CD4-positive, alpha-beta memory T cell (primary cell): ENCODE measurements at regions of chr19 and their contacts with region 1.

Region 1: DNA sequence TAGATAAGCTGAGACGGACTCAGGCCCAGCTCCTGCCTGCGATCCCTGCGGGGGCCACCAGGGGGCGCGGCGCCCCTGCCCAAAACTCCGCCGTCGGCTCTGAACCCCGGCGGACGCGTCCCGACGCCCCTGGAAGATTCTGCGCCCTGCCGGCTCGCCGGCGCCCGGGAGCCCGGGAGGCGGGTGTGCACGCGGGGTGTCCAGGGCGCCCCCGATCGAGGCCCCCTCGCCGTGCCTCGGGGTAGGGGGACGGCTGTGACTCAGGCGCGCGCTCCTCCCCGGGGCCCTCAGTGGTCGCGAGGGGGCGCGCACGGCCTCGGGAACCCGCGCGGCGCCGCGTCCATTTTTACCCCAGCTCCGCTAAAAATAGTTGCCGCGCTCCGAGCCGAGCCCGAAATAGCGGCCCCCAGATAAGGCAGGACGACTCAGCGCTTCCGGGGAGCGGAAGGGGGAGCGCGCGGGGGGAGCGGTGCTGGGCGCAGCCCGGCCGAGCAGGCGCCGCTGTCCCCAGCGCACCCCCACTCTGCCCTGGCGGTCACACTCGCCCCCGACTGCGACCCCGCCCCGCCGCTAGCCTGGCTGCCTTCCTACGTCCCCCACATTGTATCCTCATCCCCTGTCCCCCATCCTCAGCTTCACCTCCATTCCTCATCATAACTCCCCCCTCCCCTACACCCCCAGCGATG is 16.0 kb upstream of the ERCC1 start:
- DNase-seq: peak; percentile 87 to 90 (median 87)
- H3K4me3 ChIP-seq: peak overlapping the region in 1 of 2 donors; percentile 66
- H3K4me3 Mint-ChIP-seq: peak overlapping the region; percentile 65 to 83 (median 78)
- H3K27ac ChIP-seq: peak overlapping the region; percentile 62
- H3K27ac Mint-ChIP-seq: peak overlapping the region in 6 of 7 donors; percentile 83 to 96 (median 92)
- H3K4me1 ChIP-seq: peaks cover 36% of the 10 kb centered on the region
- H3K4me1 Mint-ChIP-seq: peaks cover 15 to 40% (median 27%) of the 10 kb centered on the region in 4 donors
- H3K27me3 ChIP-seq: no peaks in the 10 kb centered on the region
- H3K27me3 Mint-ChIP-seq: no peaks in the 10 kb centered on the region

Region 2: DNA sequence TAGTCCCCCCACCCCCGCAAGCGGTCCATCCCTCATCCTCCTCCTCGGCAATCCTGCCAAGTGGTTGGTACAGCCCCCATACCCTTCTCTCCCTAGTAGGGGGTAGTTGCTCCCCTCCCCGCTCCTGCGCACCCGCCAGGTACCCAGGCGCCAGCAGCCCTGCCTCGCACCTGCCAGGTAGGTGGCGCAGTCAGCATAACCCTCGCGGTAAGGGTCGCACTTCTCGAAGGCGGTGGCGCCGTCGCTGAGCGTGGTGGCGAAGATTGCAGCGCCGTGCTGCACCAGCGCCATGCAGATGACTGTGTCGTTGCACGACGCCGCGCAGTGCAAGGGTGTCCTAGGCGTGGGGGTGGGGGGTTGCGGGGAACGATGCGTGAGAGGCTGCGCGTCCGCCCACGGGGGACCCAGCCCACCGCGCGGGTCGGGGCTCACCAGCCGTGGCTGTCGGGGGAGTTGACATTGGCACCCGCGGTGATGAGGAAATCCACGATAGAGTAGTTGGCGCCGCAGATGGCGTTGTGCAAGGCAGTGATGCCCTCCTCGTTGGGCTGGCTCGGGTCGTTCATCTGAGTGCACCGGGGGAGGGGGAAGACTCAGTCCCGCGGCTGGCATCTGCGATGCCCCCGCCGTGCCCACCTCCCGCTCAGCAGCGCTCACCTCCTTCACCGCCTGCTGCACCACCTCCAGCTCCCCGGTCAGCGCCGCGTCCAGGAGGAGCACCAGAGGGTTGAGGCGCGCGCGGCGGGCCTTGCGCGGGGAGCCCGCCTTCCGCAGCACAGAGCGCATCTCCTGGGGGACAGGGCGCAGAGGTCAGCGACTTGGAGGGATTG is 54.1 kb before region 1 on chr19:
- CTCF ChIA-PET with region 1: no interaction called
- POLR2A ChIA-PET with region 1: no interaction called
- intact Hi-C with region 1: no loop called
- DNase-seq: no peak
- H3K4me3 ChIP-seq: no peak overlapping the region
- H3K4me3 Mint-ChIP-seq: peak overlapping the region in 1 of 8 donors; percentile 36
- H3K27ac ChIP-seq: no peak overlapping the region
- H3K27ac Mint-ChIP-seq: no peak overlapping the region
- H3K4me1 ChIP-seq: peaks cover 3% of the 10 kb centered on the region
- H3K4me1 Mint-ChIP-seq: peaks cover 0 to 7% (median 0%) of the 10 kb centered on the region in 4 donors
- H3K27me3 ChIP-seq: peaks cover 5% of the 10 kb centered on the region
- H3K27me3 Mint-ChIP-seq: peaks cover 13 to 24% of the 10 kb centered on the region in 2 donors

Region 3: GRCh38 chr19:45423589-45424190 is 16.0 kb before region 1 on chr19 and contains the start of gene ERCC1:
- CTCF ChIA-PET with region 1: interaction called, 13 read pairs
- POLR2A ChIA-PET with region 1: interaction called, 9 read pairs
- intact Hi-C with region 1: no loop called
- DNase-seq: peak in 4 of 5 donors; percentile 67 to 87 (median 71)
- H3K4me3 ChIP-seq: peak within 1 kb of the TSS; percentile 54 to 74
- H3K4me3 Mint-ChIP-seq: peak within 1 kb of the TSS; percentile 91 to 97 (median 94)
- H3K27ac ChIP-seq: peak within 1 kb of the TSS; percentile 68
- H3K27ac Mint-ChIP-seq: peak within 1 kb of the TSS; percentile 89 to 97 (median 94)
- H3K4me1 ChIP-seq: peaks cover 36% of the 10 kb centered on the region
- H3K4me1 Mint-ChIP-seq: peaks cover 28 to 58% (median 41%) of the 10 kb centered on the region in 4 donors
- H3K27me3 ChIP-seq: no peaks in the 10 kb centered on the region
- H3K27me3 Mint-ChIP-seq: peaks cover 0 to 2% of the 10 kb centered on the region in 2 donors
- total RNA-seq, gene ERCC1: 46.6 to 46.9 TPM

Region 4: DNA sequence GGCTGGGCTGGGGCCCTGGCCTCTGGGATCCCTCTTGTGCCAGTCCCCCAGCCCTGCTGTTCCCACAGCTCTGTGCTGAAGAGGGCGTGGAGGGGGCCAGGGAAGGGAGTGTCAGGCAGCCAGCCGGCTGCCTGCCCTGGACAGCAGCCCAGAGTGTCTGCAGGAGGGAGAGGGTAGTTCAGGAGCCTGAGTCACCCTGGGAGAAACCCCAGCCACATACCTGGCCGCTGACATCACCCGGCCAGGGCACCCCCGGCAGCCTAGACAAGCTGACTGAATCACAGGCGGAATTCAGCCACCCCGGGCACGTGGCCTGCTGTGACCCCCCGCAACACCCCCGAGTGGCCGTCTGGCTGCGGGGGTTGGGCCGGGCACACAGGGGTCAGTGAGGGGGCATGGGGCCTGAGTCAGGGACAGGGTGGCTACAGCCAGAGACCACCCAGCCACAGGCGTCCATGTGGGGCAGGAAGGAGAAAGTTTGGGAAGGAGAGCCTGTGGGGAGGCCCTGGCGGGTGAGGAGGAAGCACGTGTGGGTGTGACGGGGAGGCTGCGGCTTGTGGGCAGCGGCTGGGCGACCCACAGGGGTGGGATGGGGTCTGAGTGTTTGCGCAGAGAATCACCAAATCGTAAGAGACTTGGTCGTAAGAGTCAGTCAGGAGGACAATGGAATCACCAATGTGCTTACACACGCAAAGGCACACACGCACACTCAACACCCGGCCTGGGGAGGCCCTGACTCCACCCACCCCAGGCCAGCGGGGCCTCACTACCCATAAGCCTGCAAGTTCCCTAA is 16.2 kb after region 1 on chr19:
- CTCF ChIA-PET with region 1: interaction called, 13 read pairs
- POLR2A ChIA-PET with region 1: interaction called, 5 read pairs
- intact Hi-C with region 1: no loop called
- DNase-seq: peak; percentile 51 to 91 (median 54)
- H3K4me3 ChIP-seq: no peak overlapping the region
- H3K4me3 Mint-ChIP-seq: peak overlapping the region; percentile 54 to 81 (median 63)
- H3K27ac ChIP-seq: peak overlapping the region; percentile 20
- H3K27ac Mint-ChIP-seq: peak overlapping the region; percentile 75 to 95 (median 86)
- H3K4me1 ChIP-seq: peaks cover 30% of the 10 kb centered on the region
- H3K4me1 Mint-ChIP-seq: peaks cover 20 to 48% (median 27%) of the 10 kb centered on the region in 4 donors
- H3K27me3 ChIP-seq: no peaks in the 10 kb centered on the region
- H3K27me3 Mint-ChIP-seq: peaks cover 0 to 4% of the 10 kb centered on the region in 2 donors

Region 5: DNA sequence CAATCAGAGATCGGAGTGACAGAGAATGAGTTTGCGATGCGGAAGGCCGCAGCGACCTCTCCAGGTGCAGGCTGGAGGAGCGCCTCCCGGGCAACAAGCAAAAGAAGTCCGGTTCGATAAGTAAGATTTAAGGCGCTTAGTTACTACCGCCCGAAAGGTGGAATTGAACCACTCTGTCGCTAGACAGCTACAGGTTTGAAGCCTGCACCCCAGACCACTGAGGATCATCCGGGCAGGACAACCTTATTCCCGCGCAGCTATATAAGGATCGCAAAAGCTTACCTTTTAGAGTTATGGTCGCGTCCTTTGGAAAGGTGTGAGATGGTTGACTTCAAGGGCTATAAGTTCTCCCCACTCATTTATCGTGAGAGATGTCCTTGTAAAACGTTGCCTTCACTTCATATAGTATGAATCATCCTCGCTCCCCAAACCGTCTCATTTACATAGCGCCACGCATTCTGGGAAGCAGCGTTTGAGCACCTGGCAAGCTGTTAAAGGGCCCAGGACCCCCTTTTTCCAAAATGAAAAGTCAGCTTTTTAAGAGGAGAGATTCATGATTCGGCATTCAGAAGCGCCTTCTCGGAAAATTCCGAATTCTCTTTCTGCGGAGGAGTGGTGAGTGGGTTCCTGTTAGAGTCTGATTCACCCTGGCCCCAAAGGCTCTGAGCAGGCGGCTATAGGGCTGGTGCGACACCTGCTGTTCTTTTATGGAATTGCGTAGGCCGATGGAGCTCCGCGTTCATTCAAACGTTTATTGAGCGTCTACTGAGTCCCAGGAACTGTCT is 38.9 kb after region 1 on chr19:
- CTCF ChIA-PET with region 1: interaction called, 487 read pairs
- POLR2A ChIA-PET with region 1: interaction called, 202 read pairs
- intact Hi-C with region 1: loop called (anchors 1 kb)
- DNase-seq: peak; percentile 91 to 92 (median 91)
- H3K4me3 ChIP-seq: peak overlapping the region; percentile 51 to 74
- H3K4me3 Mint-ChIP-seq: peak overlapping the region; percentile 62 to 93 (median 84)
- H3K27ac ChIP-seq: peak overlapping the region; percentile 93
- H3K27ac Mint-ChIP-seq: peak overlapping the region; percentile 97 to 99 (median 98)
- H3K4me1 ChIP-seq: peaks cover 14% of the 10 kb centered on the region
- H3K4me1 Mint-ChIP-seq: peaks cover 25 to 46% (median 28%) of the 10 kb centered on the region in 4 donors
- H3K27me3 ChIP-seq: no peaks in the 10 kb centered on the region
- H3K27me3 Mint-ChIP-seq: peaks cover 1% of the 10 kb centered on the region in 2 donors

Region 6: GRCh38 chr19:45496349-45496953 is 56.7 kb after region 1 on chr19:
- CTCF ChIA-PET with region 1: interaction called, 11 read pairs
- POLR2A ChIA-PET with region 1: interaction called, 5 read pairs
- intact Hi-C with region 1: no loop called
- DNase-seq: peak; percentile 26 to 55 (median 44)
- H3K4me3 ChIP-seq: peak overlapping the region; percentile 23 to 54
- H3K4me3 Mint-ChIP-seq: peak overlapping the region; percentile 57 to 79 (median 69)
- H3K27ac ChIP-seq: no peak overlapping the region
- H3K27ac Mint-ChIP-seq: peak overlapping the region in 1 of 7 donors; percentile 91
- H3K4me1 ChIP-seq: peaks cover 44% of the 10 kb centered on the region
- H3K4me1 Mint-ChIP-seq: peaks cover 23 to 58% (median 41%) of the 10 kb centered on the region in 4 donors
- H3K27me3 ChIP-seq: peaks cover 10% of the 10 kb centered on the region
- H3K27me3 Mint-ChIP-seq: peaks cover 5 to 7% of the 10 kb centered on the region in 2 donors